CD8-positive, alpha-beta T cell (primary cell): ENCODE measurements at regions of chr1 and their contacts with region 1.

Region 1: DNA sequence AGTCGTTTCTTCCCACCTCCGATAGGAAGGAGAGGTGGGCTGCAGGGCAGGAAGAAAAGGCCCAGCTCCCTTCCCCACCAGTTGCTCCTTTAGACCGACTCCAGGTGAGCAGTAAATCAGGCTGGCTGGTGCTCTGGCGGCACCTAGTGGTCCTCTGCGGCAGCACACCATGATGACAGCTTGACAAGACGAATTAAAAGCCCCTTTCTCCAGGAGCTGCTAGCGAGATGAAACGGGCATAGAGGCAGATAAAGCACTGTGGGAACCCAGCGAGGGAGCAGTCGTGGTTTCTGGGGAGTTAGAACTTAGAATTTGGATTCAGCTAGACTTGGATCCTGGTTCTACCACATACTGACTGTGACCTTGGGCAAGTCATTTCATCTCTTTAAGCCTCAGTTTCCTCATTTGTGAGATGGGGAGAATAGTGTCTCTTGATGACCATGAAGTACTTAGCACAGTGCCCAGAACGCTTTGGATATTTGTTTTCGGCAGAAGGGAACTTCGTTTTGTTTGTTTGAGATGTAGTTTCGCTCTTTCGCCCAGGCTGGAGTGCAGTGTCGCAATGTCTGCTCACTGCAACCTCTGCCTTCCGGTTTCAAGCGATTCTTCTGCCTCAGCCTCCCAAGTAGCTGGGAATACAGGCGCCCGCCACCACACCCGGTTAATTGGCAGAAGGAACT is 21.8 kb upstream of the COL9A2 start:
- DNase-seq: peak; percentile 80 to 95 (median 89)
- ATAC-seq: peak; percentile 98
- H3K4me3 ChIP-seq: no peak overlapping the region
- H3K4me3 Mint-ChIP-seq: peak overlapping the region; percentile 42
- H3K27ac ChIP-seq: no peak overlapping the region
- H3K27ac Mint-ChIP-seq: peak overlapping the region; percentile 10
- H3K4me1 ChIP-seq: peaks cover 25% of the 10 kb centered on the region
- H3K4me1 Mint-ChIP-seq: peaks cover 41% of the 10 kb centered on the region
- H3K27me3 ChIP-seq: no peaks in the 10 kb centered on the region
- H3K27me3 Mint-ChIP-seq: no peaks in the 10 kb centered on the region
- CTCF ChIP-seq: peak; percentile 94

Region 2: GRCh38 chr1:39919545-39919944 is 419.3 kb before region 1 on chr1:
- CTCF ChIA-PET with region 1: interaction called, 4 read pairs
- POLR2A ChIA-PET with region 1: no interaction called
- intact Hi-C with region 1: loop called in 1 of 2 experiments (anchors 10 kb)
- DNase-seq: peak in 8 of 9 experiments; percentile 13 to 79 (median 28)
- ATAC-seq: peak; percentile 100
- H3K4me3 ChIP-seq: no peak overlapping the region
- H3K4me3 Mint-ChIP-seq: no peak overlapping the region
- H3K27ac ChIP-seq: no peak overlapping the region
- H3K27ac Mint-ChIP-seq: no peak overlapping the region
- H3K4me1 ChIP-seq: no peaks in the 10 kb centered on the region
- H3K4me1 Mint-ChIP-seq: peaks cover 2% of the 10 kb centered on the region
- H3K27me3 ChIP-seq: no peaks in the 10 kb centered on the region
- H3K27me3 Mint-ChIP-seq: peaks cover 2% of the 10 kb centered on the region
- CTCF ChIP-seq: peak; percentile 67

Region 3: DNA sequence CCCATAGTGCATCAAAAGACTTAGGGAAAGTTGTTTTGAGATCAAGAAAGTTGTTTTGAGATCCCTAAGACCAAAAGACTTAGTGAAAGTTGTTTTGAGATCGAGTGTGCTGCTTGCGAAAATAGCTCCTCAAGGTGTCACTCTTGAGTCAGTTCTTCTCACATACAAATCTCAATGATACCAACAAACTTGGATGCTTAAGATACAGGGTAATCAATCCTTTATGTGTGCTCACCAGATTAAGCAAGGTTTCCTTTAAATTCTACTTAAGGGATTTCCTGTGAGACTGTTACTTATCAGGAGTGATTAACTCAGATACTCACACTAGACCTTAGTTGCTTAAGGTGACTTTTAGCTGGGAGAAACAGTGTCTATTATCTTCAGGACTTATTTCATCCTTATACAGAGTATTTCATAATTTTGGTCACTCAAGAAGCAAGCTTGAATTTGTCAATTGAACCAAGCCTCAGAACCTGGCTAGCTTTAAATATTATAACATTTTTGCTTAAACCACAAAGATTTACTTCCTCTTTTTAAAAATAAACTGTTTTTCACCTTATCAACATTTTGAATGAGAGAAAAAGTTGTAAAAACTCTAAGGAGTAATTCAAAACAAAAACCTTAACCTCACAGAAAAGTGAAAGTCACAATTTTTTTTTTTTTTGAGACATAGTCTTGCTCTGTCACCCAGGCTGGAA is 185.7 kb before region 1 on chr1:
- CTCF ChIA-PET with region 1: interaction called, 312 read pairs
- POLR2A ChIA-PET with region 1: interaction called, 15 read pairs
- intact Hi-C with region 1: loop called (anchors 1 kb)
- DNase-seq: peak in 5 of 9 experiments; percentile 5 to 84 (median 37)
- ATAC-seq: peak; percentile 88
- H3K4me3 ChIP-seq: no peak overlapping the region
- H3K4me3 Mint-ChIP-seq: peak overlapping the region; percentile 20
- H3K27ac ChIP-seq: no peak overlapping the region
- H3K27ac Mint-ChIP-seq: peak overlapping the region; percentile 65
- H3K4me1 ChIP-seq: no peaks in the 10 kb centered on the region
- H3K4me1 Mint-ChIP-seq: peaks cover 9% of the 10 kb centered on the region
- H3K27me3 ChIP-seq: no peaks in the 10 kb centered on the region
- H3K27me3 Mint-ChIP-seq: no peaks in the 10 kb centered on the region
- CTCF ChIP-seq: peak; percentile 76

Region 4: GRCh38 chr1:40299366-40300248 is 39.3 kb before region 1 on chr1:
- CTCF ChIA-PET with region 1: interaction called, 13 read pairs
- POLR2A ChIA-PET with region 1: no interaction called
- intact Hi-C with region 1: no loop called
- DNase-seq: no peak
- ATAC-seq: no peak
- H3K4me3 ChIP-seq: no peak overlapping the region
- H3K4me3 Mint-ChIP-seq: no peak overlapping the region
- H3K27ac ChIP-seq: no peak overlapping the region
- H3K27ac Mint-ChIP-seq: no peak overlapping the region
- H3K4me1 ChIP-seq: no peaks in the 10 kb centered on the region
- H3K4me1 Mint-ChIP-seq: no peaks in the 10 kb centered on the region
- H3K27me3 ChIP-seq: no peaks in the 10 kb centered on the region
- H3K27me3 Mint-ChIP-seq: no peaks in the 10 kb centered on the region
- CTCF ChIP-seq: no peak

Region 5: GRCh38 chr1:40373338-40374283 is 34.7 kb after region 1 on chr1 and contains the start of gene SMAP2:
- CTCF ChIA-PET with region 1: interaction called, 23 read pairs
- POLR2A ChIA-PET with region 1: interaction called, 4 read pairs
- intact Hi-C with region 1: no loop called
- DNase-seq: peak; percentile 91 to 98 (median 95)
- ATAC-seq: peak; percentile 80
- H3K4me3 ChIP-seq: peak within 1 kb of the TSS; percentile 81 to 100
- H3K4me3 Mint-ChIP-seq: peak within 1 kb of the TSS; percentile 100
- H3K27ac ChIP-seq: peak within 1 kb of the TSS; percentile 96 to 97
- H3K27ac Mint-ChIP-seq: peak within 1 kb of the TSS; percentile 99
- H3K4me1 ChIP-seq: peaks cover 35% of the 10 kb centered on the region
- H3K4me1 Mint-ChIP-seq: peaks cover 54% of the 10 kb centered on the region
- H3K27me3 ChIP-seq: no peaks in the 10 kb centered on the region
- H3K27me3 Mint-ChIP-seq: no peaks in the 10 kb centered on the region
- CTCF ChIP-seq: no peak
- total RNA-seq, gene SMAP2: 167 to 171 TPM

Region 6: DNA sequence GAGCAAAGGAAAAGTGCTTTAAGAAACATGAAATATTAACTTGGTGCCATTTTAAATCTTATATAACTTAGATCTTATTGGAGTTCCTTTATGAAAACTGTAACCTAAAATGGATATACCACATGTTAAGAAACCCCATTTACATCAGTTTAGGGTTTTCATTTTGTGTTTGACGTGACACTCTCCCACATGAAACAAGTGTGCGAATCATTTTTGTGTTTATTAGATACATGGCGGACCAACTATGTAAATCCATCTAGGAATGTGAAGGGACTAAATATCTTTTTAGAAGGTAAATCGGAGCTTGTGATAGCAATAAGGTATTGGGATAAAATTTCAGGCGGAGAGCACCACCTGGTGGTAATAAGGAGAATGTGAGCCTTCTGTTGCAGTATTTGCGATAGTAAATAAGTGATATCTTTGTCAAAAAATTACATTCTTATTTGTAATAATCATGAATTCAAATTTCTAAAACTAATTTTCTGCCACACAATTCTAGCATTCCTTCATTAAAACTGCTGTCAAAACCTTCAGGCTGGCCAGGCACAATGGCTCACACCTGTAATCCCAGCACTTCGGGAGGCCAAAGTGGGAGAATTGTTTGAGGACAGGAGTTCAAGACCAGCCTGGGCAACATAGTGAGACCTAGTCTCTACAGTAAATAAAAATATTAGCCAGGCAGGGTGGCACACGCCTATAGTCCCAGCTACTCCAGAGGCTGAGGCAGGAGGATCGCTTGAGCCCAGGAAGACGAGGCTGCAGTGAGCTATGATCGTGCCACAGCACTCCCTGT is 66.0 kb after region 1 on chr1:
- CTCF ChIA-PET with region 1: interaction called, 158 read pairs
- POLR2A ChIA-PET with region 1: interaction called, 8 read pairs
- intact Hi-C with region 1: loop called (anchors 1 kb)
- DNase-seq: peak in 5 of 9 experiments; percentile 45 to 88 (median 59)
- ATAC-seq: peak; percentile 81
- H3K4me3 ChIP-seq: no peak overlapping the region
- H3K4me3 Mint-ChIP-seq: peak overlapping the region; percentile 55
- H3K27ac ChIP-seq: peak overlapping the region; percentile 59 to 84
- H3K27ac Mint-ChIP-seq: peak overlapping the region; percentile 96
- H3K4me1 ChIP-seq: peaks cover 56% of the 10 kb centered on the region
- H3K4me1 Mint-ChIP-seq: peaks cover 77% of the 10 kb centered on the region
- H3K27me3 ChIP-seq: no peaks in the 10 kb centered on the region
- H3K27me3 Mint-ChIP-seq: no peaks in the 10 kb centered on the region
- CTCF ChIP-seq: peak; percentile 79